Heart right ventricle (tissue), 16 donors: ENCODE measurements at regions of chr4 and their contacts with region 1.

Region 1: DNA sequence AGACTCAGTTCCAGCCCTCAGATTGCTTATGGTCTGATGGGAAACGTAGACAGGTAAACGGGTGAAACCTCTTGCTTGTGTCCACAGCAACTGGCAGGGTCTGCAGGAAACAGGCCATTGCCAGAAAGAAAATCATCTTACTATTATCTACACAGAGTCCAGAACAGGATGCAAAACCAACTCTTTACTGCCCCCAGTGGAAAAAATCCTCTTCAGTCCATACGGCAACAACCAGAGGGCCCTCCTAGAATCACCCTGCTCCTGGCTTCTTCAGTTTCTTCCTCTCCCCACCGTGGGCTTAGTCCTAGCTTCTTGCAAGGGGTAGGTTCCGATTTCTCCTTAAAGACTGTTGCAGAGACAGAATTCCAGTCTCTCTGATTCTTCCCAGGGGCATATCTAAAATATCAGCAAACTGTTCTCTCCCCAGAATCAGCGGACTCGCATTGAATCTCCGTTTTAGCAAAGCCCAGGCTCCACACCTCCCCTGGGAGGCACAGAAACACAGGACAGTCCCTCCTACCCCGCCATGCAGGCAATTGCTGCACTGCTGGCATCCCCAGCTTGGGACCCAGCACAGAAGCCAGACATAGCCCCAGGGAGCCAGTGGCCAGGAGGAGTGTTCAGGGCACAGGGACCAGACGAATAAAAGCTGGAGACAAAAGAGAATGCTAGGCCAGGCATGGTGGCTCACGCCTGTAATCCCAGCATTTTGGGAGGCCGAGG is 41.0 kb upstream of the SH3RF1 start:
- DNase-seq: peak in 1 of 2 donors; percentile 55
- ATAC-seq: peak; percentile 60 to 87 (median 78)
- H3K4me3 ChIP-seq: no peak overlapping the region
- H3K27ac ChIP-seq: no peak overlapping the region
- H3K4me1 ChIP-seq: peaks cover 8 to 23% (median 19%) of the 10 kb centered on the region in 9 donors
- H3K27me3 ChIP-seq: no peaks in the 10 kb centered on the region
- CTCF ChIP-seq: peak; percentile 43 to 72 (median 66)

Region 2: GRCh38 chr4:168643111-168643795 is 668.6 kb before region 1 on chr4:
- intact Hi-C with region 1: no loop called
- DNase-seq: no peak
- ATAC-seq: no peak
- H3K4me3 ChIP-seq: no peak overlapping the region
- H3K27ac ChIP-seq: peak overlapping the region in 7 of 10 donors; percentile 1 to 62 (median 46)
- H3K4me1 ChIP-seq: peaks cover 5 to 81% (median 41%) of the 10 kb centered on the region in 9 donors
- H3K27me3 ChIP-seq: no peaks in the 10 kb centered on the region
- CTCF ChIP-seq: no peak

Region 3: GRCh38 chr4:169133932-169134331 is 177.9 kb before region 1 on chr4:
- intact Hi-C with region 1: loop called in 1 of 10 experiments (anchors 10 kb)
- DNase-seq: no peak
- ATAC-seq: peak in 7 of 8 donors; percentile 35 to 85 (median 67)
- H3K4me3 ChIP-seq: no peak overlapping the region
- H3K27ac ChIP-seq: peak overlapping the region in 9 of 10 donors; percentile 16 to 51 (median 24)
- H3K4me1 ChIP-seq: peaks cover 5 to 50% (median 24%) of the 10 kb centered on the region in 9 donors
- H3K27me3 ChIP-seq: no peaks in the 10 kb centered on the region
- CTCF ChIP-seq: no peak

Region 4: GRCh38 chr4:169189372-169189771 is 122.4 kb before region 1 on chr4:
- intact Hi-C with region 1: no loop called
- DNase-seq: no peak
- ATAC-seq: no peak
- H3K4me3 ChIP-seq: no peak overlapping the region
- H3K27ac ChIP-seq: no peak overlapping the region
- H3K4me1 ChIP-seq: peaks cover 0 to 24% (median 3%) of the 10 kb centered on the region in 9 donors
- H3K27me3 ChIP-seq: no peaks in the 10 kb centered on the region
- CTCF ChIP-seq: no peak